SK-N-SH (cell line): ENCODE measurements at regions of chr15 and their contacts with region 1.

Region 1: GRCh38 chr15:34241372-34242330 is 16.8 kb downstream of the EMC4 start:
- DNase-seq: peak; percentile 60
- H3K4me3 ChIP-seq: no peak overlapping the region
- H3K27ac ChIP-seq: peak overlapping the region in 1 of 2 experiments; percentile 97; a peak in 2 of 4 replicates
- H3K4me1 ChIP-seq: peaks cover 0 to 13% of the 10 kb centered on the region in 2 experiments; a peak in 2 of 4 replicates
- H3K27me3 ChIP-seq: no peaks in the 10 kb centered on the region
- CTCF ChIP-seq: peak; percentile 82
- EP300 ChIP-seq: no peak
- RAD21 ChIP-seq: peak; percentile 60

Region 2: GRCh38 chr15:33894193-33894592 is 347.5 kb before region 1 on chr15:
- CTCF ChIA-PET with region 1: no interaction called
- POLR2A ChIA-PET with region 1: no interaction called
- DNase-seq: no peak
- H3K4me3 ChIP-seq: no peak overlapping the region
- H3K27ac ChIP-seq: no peak overlapping the region
- H3K4me1 ChIP-seq: peaks cover 3 to 5% of the 10 kb centered on the region in 2 experiments; a peak in 2 of 4 replicates
- H3K27me3 ChIP-seq: no peaks in the 10 kb centered on the region
- CTCF ChIP-seq: no peak
- EP300 ChIP-seq: no peak
- RAD21 ChIP-seq: no peak

Region 3: GRCh38 chr15:34116625-34117024 is 125.0 kb before region 1 on chr15:
- CTCF ChIA-PET with region 1: no interaction called
- POLR2A ChIA-PET with region 1: no interaction called
- DNase-seq: no peak
- H3K4me3 ChIP-seq: no peak overlapping the region
- H3K27ac ChIP-seq: no peak overlapping the region
- H3K4me1 ChIP-seq: no peaks in the 10 kb centered on the region
- H3K27me3 ChIP-seq: no peaks in the 10 kb centered on the region
- CTCF ChIP-seq: no peak
- EP300 ChIP-seq: no peak
- RAD21 ChIP-seq: no peak

Region 4: GRCh38 chr15:34223904-34224596 is 17.6 kb before region 1 on chr15:
- CTCF ChIA-PET with region 1: interaction called, 13 read pairs
- POLR2A ChIA-PET with region 1: no interaction called
- DNase-seq: peak; percentile 31
- H3K4me3 ChIP-seq: peak overlapping the region; percentile 83 to 96
- H3K27ac ChIP-seq: peak overlapping the region; percentile 64 to 92
- H3K4me1 ChIP-seq: peaks cover 7 to 13% of the 10 kb centered on the region in 2 experiments; a peak in 3 of 4 replicates
- H3K27me3 ChIP-seq: no peaks in the 10 kb centered on the region
- CTCF ChIP-seq: no peak
- EP300 ChIP-seq: no peak
- RAD21 ChIP-seq: no peak

Region 5: DNA sequence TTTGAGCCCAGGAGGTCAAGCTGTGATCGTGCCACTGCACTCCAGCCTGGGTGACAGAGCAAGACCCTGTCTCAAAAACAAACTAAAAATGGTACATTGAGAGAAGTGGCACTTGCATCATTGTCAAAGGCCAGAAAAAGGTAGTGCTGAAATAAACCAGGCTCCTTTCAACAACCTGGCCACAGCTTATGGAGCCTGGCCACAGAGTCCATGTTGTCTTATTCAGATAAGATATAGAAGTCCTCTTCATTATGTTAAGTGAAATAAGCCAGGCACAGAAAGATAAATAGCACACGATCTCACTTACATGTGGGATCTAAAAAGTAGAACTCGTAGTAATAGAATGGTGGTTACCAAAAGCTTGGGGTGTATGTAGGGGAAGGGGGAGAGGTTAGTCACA is 17.9 kb after region 1 on chr15:
- CTCF ChIA-PET with region 1: interaction called, 73 read pairs
- POLR2A ChIA-PET with region 1: no interaction called
- DNase-seq: no peak
- H3K4me3 ChIP-seq: no peak overlapping the region
- H3K27ac ChIP-seq: no peak overlapping the region
- H3K4me1 ChIP-seq: no peaks in the 10 kb centered on the region; a peak in 1 of 4 replicates
- H3K27me3 ChIP-seq: no peaks in the 10 kb centered on the region
- CTCF ChIP-seq: no peak
- EP300 ChIP-seq: no peak
- RAD21 ChIP-seq: no peak